ENCODE measurements at regions of chr6 and their contacts with region 1.

Region 1: GRCh38 chr6:24949020-24949569 is 13.3 kb upstream of the RIPOR2 start:
- DNase-seq: peak in 12 of 14 experiments; percentile 38 to 89 (median 58)
- ATAC-seq: peak; percentile 45
- H3K4me3 ChIP-seq: peak overlapping the region; percentile 5
- H3K4me3 Mint-ChIP-seq: peak overlapping the region; percentile 50
- H3K27ac ChIP-seq: peak overlapping the region; percentile 56 to 70
- H3K27ac Mint-ChIP-seq: peak overlapping the region; percentile 91
- H3K4me1 ChIP-seq: peaks cover 62% of the 10 kb centered on the region
- H3K4me1 Mint-ChIP-seq: peaks cover 87% of the 10 kb centered on the region
- H3K27me3 ChIP-seq: no peaks in the 10 kb centered on the region
- H3K27me3 Mint-ChIP-seq: no peaks in the 10 kb centered on the region
- CTCF ChIP-seq: no peak

Region 2: DNA sequence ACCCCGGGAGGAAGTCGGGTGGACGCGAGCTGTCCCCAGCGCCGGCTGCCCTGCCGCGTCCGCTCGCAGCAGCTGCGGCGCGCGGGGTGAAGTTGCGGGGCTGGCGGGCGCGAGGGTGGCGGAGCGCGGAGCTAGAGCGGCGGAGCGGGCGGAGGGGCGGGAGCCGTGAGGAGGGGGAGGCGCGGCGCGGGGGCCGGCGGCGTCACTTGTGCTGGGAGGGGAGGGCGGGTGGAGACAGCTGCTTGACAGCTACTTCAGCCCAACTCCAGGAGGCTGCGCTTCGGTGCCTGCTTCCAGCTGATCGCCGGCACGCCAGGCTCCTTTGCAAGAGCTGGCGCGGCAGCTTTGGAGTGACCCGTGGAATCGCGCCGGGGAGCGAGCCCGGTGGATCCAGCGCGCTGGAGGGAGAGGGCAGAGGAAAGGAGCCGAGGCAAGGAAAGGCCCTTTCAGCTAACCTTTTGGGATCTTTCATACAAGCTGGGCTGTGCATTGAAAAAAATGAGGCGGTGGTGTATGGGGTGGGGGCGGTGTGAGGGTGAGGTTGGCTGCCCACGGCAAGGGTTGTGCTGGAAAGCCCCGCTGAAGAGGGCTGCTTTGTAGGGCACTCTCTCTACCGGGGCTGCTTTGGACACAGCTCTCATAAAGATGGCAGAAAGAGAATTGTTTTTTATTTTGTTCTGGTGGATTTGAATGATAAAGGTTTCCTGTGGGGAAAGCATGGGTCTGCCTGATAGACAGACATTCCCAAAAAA is 38.0 kb before region 1 on chr6:
- CTCF ChIA-PET with region 1: no interaction called
- POLR2A ChIA-PET with region 1: interaction called, 29 read pairs
- intact Hi-C with region 1: loop called in 1 of 2 experiments (anchors 5 kb)
- DNase-seq: peak in 13 of 14 experiments; percentile 27 to 79 (median 58)
- ATAC-seq: peak; percentile 46
- H3K4me3 ChIP-seq: peak overlapping the region; percentile 65
- H3K4me3 Mint-ChIP-seq: peak overlapping the region; percentile 95
- H3K27ac ChIP-seq: peak overlapping the region; percentile 73 to 88
- H3K27ac Mint-ChIP-seq: peak overlapping the region; percentile 97
- H3K4me1 ChIP-seq: peaks cover 93% of the 10 kb centered on the region
- H3K4me1 Mint-ChIP-seq: peaks cover 99% of the 10 kb centered on the region
- H3K27me3 ChIP-seq: no peaks in the 10 kb centered on the region
- H3K27me3 Mint-ChIP-seq: no peaks in the 10 kb centered on the region
- CTCF ChIP-seq: no peak

Region 3: GRCh38 chr6:24960991-24961475 is 11.9 kb after region 1 on chr6:
- CTCF ChIA-PET with region 1: no interaction called
- POLR2A ChIA-PET with region 1: interaction called, 59 read pairs
- intact Hi-C with region 1: loop called (anchors 1 to 2 kb)
- DNase-seq: peak in 6 of 14 experiments; percentile 11 to 63 (median 44)
- ATAC-seq: peak; percentile 81
- H3K4me3 ChIP-seq: no peak overlapping the region
- H3K4me3 Mint-ChIP-seq: peak overlapping the region; percentile 25
- H3K27ac ChIP-seq: peak overlapping the region; percentile 50 to 68
- H3K27ac Mint-ChIP-seq: peak overlapping the region; percentile 91
- H3K4me1 ChIP-seq: peaks cover 65% of the 10 kb centered on the region
- H3K4me1 Mint-ChIP-seq: peaks cover 96% of the 10 kb centered on the region
- H3K27me3 ChIP-seq: no peaks in the 10 kb centered on the region
- H3K27me3 Mint-ChIP-seq: no peaks in the 10 kb centered on the region
- CTCF ChIP-seq: no peak

Region 4: DNA sequence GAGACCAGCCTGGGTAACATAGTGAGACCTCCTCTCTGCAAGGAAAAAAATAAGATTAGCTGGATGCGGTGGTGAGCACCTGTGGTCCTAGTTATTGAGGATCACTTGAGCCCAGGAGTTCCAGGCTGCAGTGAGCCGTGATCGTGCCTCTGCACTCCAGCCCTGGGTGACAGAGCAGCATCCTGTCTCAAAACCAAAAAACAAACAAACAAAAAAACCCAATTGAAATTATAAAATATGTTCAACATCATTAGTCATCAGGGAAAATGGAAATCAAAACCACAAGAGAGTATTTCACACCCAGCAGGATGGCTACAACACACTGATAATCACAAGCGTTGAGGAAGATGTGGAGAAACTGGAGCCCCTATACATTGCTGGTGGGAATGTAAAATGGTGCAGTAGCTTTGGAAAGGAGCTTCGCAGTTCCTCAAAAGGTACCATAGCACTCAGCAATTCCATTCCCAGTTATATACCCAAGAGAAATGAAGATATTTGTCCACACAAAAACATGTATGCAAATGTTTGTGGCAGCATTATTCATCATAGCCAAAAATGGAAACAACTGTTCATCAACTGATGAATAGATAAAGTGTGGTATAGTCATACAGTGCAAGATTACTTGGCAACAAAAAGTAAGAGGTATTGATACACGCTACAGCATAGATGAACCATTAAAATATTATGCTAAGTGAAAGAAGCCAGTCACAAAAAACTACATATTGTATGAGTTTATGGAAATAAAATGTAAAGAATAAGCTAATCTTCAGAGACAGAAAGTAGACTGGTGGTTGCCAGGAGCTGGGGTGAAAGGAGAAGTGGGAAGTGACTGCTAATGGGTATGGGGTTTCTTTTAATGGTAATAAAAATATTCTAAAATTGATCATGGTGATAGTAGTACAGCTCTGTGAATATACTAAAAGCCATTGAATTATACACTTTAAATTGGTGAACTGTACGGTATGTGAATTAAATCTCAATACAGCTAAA is 25.4 kb after region 1 on chr6:
- CTCF ChIA-PET with region 1: interaction called, 4 read pairs
- POLR2A ChIA-PET with region 1: interaction called, 17 read pairs
- intact Hi-C with region 1: no loop called
- DNase-seq: peak in 5 of 14 experiments; percentile 29 to 73 (median 55)
- ATAC-seq: peak; percentile 83
- H3K4me3 ChIP-seq: no peak overlapping the region
- H3K4me3 Mint-ChIP-seq: peak overlapping the region; percentile 67
- H3K27ac ChIP-seq: peak overlapping the region; percentile 24 to 25
- H3K27ac Mint-ChIP-seq: peak overlapping the region; percentile 90
- H3K4me1 ChIP-seq: peaks cover 36% of the 10 kb centered on the region
- H3K4me1 Mint-ChIP-seq: peaks cover 80% of the 10 kb centered on the region
- H3K27me3 ChIP-seq: no peaks in the 10 kb centered on the region
- H3K27me3 Mint-ChIP-seq: no peaks in the 10 kb centered on the region
- CTCF ChIP-seq: no peak

Region 5: DNA sequence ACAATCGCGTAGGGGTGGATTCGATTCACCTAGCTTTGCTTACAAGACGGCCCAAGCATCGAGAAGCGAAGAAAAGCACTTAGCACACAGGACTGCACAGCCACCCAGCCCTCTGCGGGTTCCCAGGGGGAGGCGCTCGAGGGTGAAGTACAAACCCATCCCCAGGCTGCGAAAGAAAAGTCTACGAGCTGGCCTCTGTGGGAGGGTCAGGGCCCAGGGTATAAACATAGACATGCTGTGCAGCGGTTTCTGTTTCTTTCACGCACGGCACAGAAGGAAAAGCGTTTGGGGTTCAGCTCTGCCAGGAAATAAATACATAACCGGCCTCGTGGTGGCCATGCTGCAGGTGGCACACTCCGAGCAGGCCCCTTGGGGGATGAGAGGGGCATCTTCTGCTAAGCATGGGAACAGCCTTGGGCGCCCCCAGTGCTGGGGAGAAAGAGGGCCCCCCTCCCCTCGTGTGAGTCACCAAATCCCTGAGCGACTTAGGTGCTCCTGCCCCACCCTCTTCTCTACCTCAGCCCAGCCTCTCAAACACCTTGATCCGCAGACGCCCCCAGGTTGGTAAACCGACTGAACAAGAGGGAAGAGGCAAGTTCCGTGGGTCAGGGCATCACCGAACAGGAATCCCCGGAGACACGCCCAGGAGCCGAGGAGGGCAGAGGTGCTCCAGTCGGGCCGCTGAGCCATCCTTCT is 78.3 kb after region 1 on chr6:
- CTCF ChIA-PET with region 1: no interaction called
- POLR2A ChIA-PET with region 1: interaction called, 10 read pairs
- intact Hi-C with region 1: no loop called
- DNase-seq: peak; percentile 64 to 93 (median 76)
- ATAC-seq: peak; percentile 93
- H3K4me3 ChIP-seq: peak overlapping the region; percentile 47
- H3K4me3 Mint-ChIP-seq: peak overlapping the region; percentile 70
- H3K27ac ChIP-seq: peak overlapping the region; percentile 60 to 62
- H3K27ac Mint-ChIP-seq: peak overlapping the region; percentile 91
- H3K4me1 ChIP-seq: peaks cover 37% of the 10 kb centered on the region
- H3K4me1 Mint-ChIP-seq: peaks cover 59% of the 10 kb centered on the region
- H3K27me3 ChIP-seq: no peaks in the 10 kb centered on the region
- H3K27me3 Mint-ChIP-seq: no peaks in the 10 kb centered on the region
- CTCF ChIP-seq: peak; percentile 41